A673 (cell line): ENCODE measurements at regions of chr7 and their contacts with region 1.

Region 1: GRCh38 chr7:126394406-126394805 is 858.3 kb downstream of the GRM8 start:
- DNase-seq: no peak
- H3K4me3 ChIP-seq: no peak overlapping the region
- H3K27ac ChIP-seq: no peak overlapping the region
- H3K4me1 ChIP-seq: no peaks in the 10 kb centered on the region
- H3K27me3 ChIP-seq: no peaks in the 10 kb centered on the region
- CTCF ChIP-seq: no peak

Region 2: DNA sequence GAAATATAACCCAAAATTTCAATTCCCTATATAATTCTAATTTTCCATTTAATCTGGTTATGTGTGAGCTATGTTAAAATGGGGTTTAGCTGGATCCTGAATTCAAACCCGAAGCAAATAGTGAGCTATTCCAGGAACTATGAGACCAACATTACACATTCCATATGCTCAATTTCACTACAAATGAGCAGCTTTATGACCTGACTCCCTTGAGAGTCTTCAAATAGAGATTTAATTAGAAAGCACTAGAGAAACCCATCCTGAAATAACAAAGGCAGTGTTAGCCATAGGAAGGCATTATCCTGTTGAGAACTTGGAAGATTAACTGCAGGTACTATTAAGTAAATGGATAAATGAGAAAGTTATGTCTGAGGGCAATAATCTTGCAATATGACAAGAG is 31.7 kb before region 1 on chr7:
- CTCF ChIA-PET with region 1: no interaction called
- POLR2A ChIA-PET with region 1: no interaction called
- intact Hi-C with region 1: no loop called
- DNase-seq: peak; percentile 24
- H3K4me3 ChIP-seq: no peak overlapping the region
- H3K27ac ChIP-seq: no peak overlapping the region
- H3K4me1 ChIP-seq: no peaks in the 10 kb centered on the region
- H3K27me3 ChIP-seq: no peaks in the 10 kb centered on the region
- CTCF ChIP-seq: no peak

Region 3: DNA sequence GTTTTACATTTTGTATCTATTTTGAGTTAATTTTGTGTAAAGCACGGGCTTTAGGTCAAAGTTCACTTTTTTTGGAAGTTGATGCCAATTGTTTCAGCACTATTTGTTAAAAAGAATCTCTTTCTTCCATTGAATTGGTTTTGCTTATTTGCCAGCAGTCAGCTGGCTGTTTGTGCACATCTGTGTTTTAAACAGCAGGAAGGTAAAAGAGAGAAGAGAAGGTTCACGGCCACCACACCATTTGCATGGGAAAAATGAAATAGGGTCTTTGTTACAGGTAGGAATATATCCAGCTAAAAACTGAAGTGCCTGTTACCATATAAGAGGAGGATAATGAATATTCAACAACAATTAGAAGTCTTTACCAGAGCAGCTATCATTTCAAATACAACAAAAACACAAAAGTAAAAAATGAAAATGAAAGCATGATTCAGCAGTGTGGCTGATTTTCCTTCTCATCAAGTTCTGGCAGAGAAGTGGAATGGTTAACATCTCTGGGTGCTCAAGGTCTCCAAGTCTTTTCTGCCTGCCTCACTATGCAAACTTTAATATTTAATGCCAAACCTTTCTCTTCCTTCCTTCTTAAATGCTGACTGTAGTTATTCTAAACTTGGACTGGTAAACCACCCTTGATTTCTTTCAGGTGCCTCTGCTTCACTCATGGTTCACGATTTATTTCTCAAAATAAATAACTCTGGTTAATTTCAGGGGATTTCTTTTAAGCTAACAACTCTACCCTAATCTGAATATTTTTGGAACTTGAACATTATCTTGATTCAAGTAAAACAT is 16.8 kb after region 1 on chr7:
- CTCF ChIA-PET with region 1: no interaction called
- POLR2A ChIA-PET with region 1: no interaction called
- intact Hi-C with region 1: no loop called
- DNase-seq: no peak
- H3K4me3 ChIP-seq: no peak overlapping the region
- H3K27ac ChIP-seq: no peak overlapping the region
- H3K4me1 ChIP-seq: no peaks in the 10 kb centered on the region
- H3K27me3 ChIP-seq: no peaks in the 10 kb centered on the region
- CTCF ChIP-seq: no peak

Region 4: GRCh38 chr7:126460664-126461063 is 66.3 kb after region 1 on chr7:
- CTCF ChIA-PET with region 1: no interaction called
- POLR2A ChIA-PET with region 1: interaction called, 12 read pairs
- intact Hi-C with region 1: no loop called
- DNase-seq: no peak
- H3K4me3 ChIP-seq: no peak overlapping the region
- H3K27ac ChIP-seq: no peak overlapping the region
- H3K4me1 ChIP-seq: no peaks in the 10 kb centered on the region
- H3K27me3 ChIP-seq: no peaks in the 10 kb centered on the region
- CTCF ChIP-seq: no peak